ENCODE measurements at regions of chr5 and their contacts with region 1.

Region 1: DNA sequence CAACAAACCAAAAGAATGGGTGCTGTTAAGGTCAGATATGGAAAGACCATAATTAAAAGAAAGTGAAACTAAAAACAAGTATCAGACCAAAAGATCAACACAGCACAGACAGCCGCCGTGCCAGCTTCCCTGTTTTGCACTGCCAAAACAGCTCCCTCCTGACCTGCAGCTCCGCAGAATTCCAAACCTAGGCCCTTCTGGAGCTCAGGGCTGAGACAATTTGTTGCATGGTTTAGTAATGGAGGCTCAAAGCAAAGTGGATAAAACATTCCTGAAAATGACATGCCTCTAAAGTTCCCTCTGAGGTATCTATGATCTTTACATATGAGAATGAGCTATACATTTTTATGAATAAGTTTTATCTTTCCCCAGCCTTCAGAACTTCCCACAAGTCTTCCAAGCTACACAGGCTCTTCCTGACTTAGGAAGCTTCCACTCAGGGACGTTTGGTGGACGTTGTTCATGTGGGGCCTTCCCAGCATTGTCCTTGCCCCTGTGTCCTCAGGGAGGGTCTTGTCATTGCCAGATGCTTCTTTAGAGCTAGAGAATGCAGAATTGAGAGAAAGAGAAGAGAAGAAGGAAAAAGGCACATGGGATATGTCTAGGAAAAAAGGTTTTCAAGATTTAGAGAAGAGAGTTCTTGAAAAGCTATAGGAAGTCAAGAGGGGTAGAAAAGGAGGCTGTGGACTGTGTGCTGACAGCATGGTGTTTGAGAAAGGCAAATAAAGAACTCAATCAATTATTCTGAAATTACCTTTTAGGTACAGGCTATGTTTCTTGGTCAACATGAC is 28.4 kb upstream of the SSBP2 start:
- DNase-seq: peak; percentile 43

Region 2: DNA sequence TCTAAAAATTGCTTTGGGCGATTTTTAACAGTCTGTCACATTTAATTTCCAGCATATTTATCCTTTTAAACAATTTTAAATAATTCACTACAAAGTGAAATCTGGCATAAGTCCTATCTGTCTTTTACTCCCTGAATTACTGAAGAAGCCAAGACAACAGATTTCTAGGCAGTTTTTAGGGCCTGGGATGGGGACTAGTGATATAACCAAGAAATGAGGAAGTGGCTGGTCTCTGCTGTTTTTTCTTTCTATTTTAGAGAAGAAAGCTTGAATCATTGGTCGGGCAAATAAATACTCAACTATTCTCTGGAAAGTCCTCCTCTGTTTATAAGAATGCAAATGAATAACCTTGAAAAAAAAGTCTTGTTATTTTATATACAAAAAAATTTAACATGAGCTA is 51.3 kb after region 1 on chr5:
- in situ Hi-C with region 1: loop called (anchors 5 kb)
- DNase-seq: no peak

Region 3: GRCh38 chr5:81936066-81936465 is 156.7 kb after region 1 on chr5:
- in situ Hi-C with region 1: no loop called
- DNase-seq: no peak

Region 4: DNA sequence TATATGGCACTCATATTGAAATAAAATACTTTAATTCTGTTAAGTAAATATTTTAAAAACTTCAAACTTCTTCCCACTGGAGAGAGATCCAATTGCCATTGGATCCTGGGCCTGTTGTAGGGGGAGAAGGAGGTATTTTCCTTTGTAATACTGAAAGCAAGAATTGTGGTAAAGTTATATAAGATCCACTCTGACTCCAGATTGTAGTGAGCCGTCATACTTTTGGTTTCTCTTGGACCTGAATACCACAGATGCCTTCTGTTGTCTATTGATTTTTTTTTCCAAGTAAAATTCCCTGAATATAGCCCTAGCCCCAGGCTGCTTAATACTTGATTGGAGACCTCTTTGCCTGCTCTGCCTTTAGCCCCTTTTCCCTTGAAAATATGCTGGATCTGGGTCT is 279.4 kb after region 1 on chr5:
- in situ Hi-C with region 1: no loop called
- DNase-seq: no peak

Region 5: GRCh38 chr5:82684165-82684564 is 904.8 kb after region 1 on chr5:
- in situ Hi-C with region 1: no loop called
- DNase-seq: no peak

Measured in SK-MEL-5 (cell line).